Sigmoid colon (tissue), 7 donors: ENCODE measurements at regions of chr16 and their contacts with region 1.

Region 1: DNA sequence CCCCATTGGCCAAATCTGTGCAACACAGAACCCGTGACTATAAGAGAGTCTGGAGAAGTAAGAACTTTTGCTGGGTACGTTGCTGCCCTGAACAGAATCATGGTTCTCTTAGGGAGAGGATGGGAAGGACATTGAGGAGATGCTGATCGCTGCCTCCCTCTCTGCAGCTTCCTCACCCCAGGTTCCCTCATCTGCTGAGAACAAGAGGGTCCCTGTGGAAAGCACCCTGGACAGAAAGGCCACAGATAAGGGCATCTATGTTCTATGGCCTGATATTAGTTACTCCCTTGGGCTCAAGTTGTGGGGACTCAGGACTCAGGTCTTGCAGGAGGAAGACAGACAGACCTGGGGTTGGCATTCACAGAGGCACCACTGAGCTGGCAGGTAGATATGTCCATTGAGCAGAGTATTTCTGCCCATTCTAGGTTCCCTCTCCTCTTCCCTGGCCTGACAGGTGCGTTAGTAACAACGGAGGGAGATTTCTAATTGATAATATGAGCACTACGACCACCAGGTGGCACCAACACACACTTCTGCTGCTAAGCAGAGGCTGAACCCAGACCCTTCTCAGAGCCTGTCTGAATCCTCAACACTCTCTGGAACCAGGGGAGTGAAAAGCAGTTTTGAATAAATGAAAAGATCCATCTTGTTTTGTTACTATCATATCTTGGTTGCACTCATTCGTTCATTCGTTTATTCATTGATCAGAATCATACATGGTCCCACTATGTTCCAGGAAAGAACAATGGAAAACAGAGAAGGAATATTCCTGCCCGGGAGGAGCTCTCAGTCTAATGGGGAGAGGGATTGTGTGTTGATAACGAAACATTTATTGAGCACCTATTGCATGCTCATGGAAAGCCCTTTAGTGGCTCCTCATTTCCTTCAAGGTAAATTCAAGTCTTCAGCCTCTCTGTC is 56.4 kb downstream of the SLC6A2 start:
- DNase-seq: peak; percentile 74
- H3K4me3 ChIP-seq: no peak overlapping the region
- H3K27ac ChIP-seq: no peak overlapping the region
- H3K4me1 ChIP-seq: no peaks in the 10 kb centered on the region
- H3K27me3 ChIP-seq: peaks cover 0 to 37% (median 0%) of the 10 kb centered on the region in 3 donors
- CTCF ChIP-seq: peak in 3 of 4 experiments; percentile 49 to 64 (median 52)
- EP300 ChIP-seq: no peak
- POLR2A ChIP-seq: no peak

Region 2: DNA sequence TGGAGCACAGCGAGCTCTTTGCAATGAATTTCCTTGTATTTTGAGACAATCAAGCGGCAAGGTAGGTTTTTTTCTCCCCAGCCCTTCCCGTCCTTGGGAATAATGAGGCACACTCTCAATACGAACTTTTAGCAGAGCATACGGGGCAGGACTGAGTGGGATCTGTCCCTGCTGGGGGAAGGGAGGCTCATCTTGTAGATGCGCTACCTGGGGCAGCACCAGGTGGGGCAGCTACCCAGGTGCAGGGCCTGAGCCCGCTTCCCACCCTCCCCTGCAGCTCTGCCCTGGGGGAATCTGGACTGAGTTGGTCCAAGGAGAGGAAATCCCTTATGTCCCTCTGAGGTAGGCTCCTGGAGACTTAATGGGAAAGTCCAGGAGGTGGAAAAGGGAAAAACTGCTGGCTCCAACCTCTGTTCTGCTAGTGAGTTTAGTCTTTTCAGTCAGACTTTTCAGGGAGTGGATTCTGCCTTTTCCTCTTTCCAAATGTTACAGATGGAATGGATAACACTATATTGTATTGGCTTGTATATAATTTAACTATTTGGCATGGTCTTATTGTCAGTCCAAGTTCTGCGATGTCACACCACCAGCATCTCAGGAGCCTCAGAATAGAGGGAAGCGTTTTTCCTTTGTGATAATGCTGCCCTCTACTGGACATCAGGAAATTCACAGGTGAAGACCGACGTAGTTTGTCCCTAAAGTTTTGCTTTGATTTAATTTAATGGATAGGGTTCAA is 130.3 kb after region 1 on chr16:
- intact Hi-C with region 1: loop called (anchors 1 kb)
- DNase-seq: no peak
- H3K4me3 ChIP-seq: no peak overlapping the region
- H3K27ac ChIP-seq: no peak overlapping the region
- H3K4me1 ChIP-seq: no peaks in the 10 kb centered on the region
- H3K27me3 ChIP-seq: peaks cover 0 to 20% (median 0%) of the 10 kb centered on the region in 3 donors
- CTCF ChIP-seq: peak; percentile 37 to 82 (median 54)
- EP300 ChIP-seq: no peak
- POLR2A ChIP-seq: no peak